Endothelial cell of umbilical vein (primary cell): ENCODE measurements at regions of chr6 and their contacts with region 1.

Region 1: GRCh38 chr6:150685860-150686259 is 86.2 kb downstream of the PLEKHG1 start:
- DNase-seq: peak; percentile 23
- H3K4me3 ChIP-seq: no peak overlapping the region
- H3K27ac ChIP-seq: no peak overlapping the region
- H3K4me1 ChIP-seq: peaks cover 60% of the 10 kb centered on the region
- H3K27me3 ChIP-seq: no peaks in the 10 kb centered on the region
- CTCF ChIP-seq: peak; percentile 44 to 46
- POLR2A ChIP-seq: no peak

Region 2: DNA sequence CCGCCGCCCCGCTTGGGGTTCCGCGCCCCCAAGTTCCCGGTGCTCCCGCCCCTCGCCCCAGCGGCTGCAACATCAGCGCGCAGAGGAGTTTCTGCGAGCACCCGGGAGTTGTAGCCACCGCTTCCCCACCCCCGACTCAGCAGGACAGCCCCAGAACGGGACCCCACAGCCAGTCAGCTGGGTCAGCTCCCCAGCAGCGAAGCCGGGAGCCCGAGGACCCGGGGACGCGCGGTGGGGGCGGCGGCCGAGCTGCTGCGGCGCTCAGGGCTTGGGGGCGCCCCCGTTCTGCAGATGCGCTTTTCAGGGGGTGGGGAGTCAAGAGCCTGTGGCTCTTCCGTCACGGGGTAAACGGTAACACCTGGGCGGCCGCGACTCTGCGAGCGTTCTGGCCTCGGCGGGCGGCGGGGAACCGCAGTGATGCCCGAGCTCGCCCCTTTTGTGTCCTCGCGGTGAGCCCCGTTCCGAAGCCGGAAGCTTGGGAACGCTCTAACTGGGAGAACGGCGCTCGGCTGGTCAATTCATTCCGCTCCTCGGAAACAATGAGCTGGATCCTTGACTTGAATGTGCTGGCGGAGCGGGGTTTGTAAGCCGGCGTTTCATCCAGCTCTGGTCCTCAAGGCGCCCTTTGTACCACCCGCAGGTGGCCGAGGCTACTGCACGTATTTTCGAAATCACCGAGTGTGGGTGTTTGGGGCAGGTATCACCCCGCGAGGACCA is 85.4 kb before region 1 on chr6:
- CTCF ChIA-PET with region 1: interaction called, 24 read pairs
- POLR2A ChIA-PET with region 1: no interaction called
- dilution Hi-C with region 1: no loop called
- intact Hi-C with region 1: loop called (anchors 1 kb)
- DNase-seq: peak; percentile 76
- H3K4me3 ChIP-seq: peak overlapping the region; percentile 68 to 80 (median 70)
- H3K27ac ChIP-seq: peak overlapping the region; percentile 35
- H3K4me1 ChIP-seq: peaks cover 8% of the 10 kb centered on the region
- H3K27me3 ChIP-seq: peaks cover 21 to 31% of the 10 kb centered on the region in 2 experiments
- CTCF ChIP-seq: peak; percentile 43 to 61
- POLR2A ChIP-seq: no peak

Region 3: DNA sequence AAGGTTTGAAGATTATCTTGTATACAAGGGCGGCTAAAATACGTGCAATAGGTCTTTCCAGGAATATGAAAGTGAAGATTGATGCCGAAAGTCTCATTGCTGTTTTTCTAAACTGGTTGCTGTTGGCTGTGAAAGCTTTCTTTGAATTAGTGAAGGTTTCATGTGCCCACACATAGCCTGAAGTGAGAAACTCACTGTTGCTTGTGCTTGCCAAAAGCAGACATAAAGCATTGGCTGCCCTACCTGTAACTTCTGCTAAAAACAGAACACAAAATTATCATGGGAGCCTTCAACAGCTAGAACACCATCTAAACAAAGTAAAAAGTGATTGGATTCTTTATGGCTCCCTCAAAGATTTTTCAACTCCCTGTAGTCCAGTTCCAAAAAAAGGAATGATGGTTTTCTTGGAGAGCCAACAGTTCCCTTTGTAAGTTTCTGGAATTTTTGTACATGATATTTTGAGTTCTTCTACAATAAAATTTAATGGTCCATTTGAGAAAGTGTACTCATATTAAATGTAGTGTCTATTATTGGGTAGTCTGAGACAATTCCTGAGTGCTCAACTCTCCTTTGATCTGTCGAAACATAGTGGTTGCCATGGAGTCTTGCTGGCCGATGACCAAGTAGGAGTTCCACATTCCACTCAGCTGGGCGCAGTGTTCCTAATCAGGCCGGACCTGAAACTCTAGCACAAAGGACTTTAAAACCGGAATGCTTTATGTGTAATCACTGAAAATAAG is 17.7 kb before region 1 on chr6:
- CTCF ChIA-PET with region 1: interaction called, 3 read pairs
- POLR2A ChIA-PET with region 1: no interaction called
- dilution Hi-C with region 1: no loop called
- intact Hi-C with region 1: loop called (anchors 1 kb)
- DNase-seq: peak; percentile 93
- H3K4me3 ChIP-seq: no peak overlapping the region
- H3K27ac ChIP-seq: peak overlapping the region; percentile 8
- H3K4me1 ChIP-seq: peaks cover 11% of the 10 kb centered on the region
- H3K27me3 ChIP-seq: no peaks in the 10 kb centered on the region
- CTCF ChIP-seq: peak in 1 of 2 donors; percentile 20
- POLR2A ChIP-seq: no peak

Region 4: DNA sequence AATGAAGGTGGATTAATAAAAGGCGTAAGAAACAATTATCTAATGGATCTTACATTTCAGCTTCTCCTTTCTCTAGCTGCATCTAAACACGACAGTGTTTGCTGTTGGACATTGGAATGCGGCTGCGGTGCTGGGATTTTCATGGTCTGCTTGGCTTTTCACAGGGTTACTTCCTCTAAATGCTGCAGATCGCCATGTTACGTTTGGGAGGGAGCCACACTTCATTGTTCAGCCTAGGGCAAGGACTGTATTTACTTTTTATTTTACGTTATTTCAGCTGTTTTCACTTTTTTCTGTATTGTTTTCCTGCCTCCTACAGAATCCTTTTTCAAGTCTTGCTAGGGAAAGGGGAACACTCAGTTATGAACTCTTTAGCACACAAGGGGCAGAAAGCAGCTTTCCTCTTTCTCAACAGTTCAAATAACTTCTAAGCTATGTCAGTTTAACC is 81.7 kb after region 1 on chr6:
- CTCF ChIA-PET with region 1: no interaction called
- POLR2A ChIA-PET with region 1: no interaction called
- dilution Hi-C with region 1: no loop called
- intact Hi-C with region 1: loop called (anchors 5 kb)
- DNase-seq: peak; percentile 90
- H3K4me3 ChIP-seq: no peak overlapping the region
- H3K27ac ChIP-seq: no peak overlapping the region
- H3K4me1 ChIP-seq: peaks cover 13% of the 10 kb centered on the region
- H3K27me3 ChIP-seq: no peaks in the 10 kb centered on the region
- CTCF ChIP-seq: no peak
- POLR2A ChIP-seq: no peak